ENCODE measurements at regions of chr16 and their contacts with region 1.

Region 1: GRCh38 chr16:25838724-25839186 is 147.0 kb downstream of the HS3ST4 start:
- DNase-seq: peak in 4 of 5 donors; percentile 37 to 48 (median 42)
- H3K4me3 ChIP-seq: no peak overlapping the region
- H3K4me3 Mint-ChIP-seq: peak overlapping the region in 2 of 8 donors; percentile 8 to 17
- H3K27ac ChIP-seq: no peak overlapping the region
- H3K27ac Mint-ChIP-seq: no peak overlapping the region
- H3K4me1 ChIP-seq: no peaks in the 10 kb centered on the region
- H3K4me1 Mint-ChIP-seq: peaks cover 0 to 4% (median under 1%) of the 10 kb centered on the region in 4 donors
- H3K27me3 ChIP-seq: no peaks in the 10 kb centered on the region
- H3K27me3 Mint-ChIP-seq: peaks cover 2 to 13% of the 10 kb centered on the region in 2 donors

Region 2: GRCh38 chr16:25785361-25785760 is 53.4 kb before region 1 on chr16:
- CTCF ChIA-PET with region 1: no interaction called
- POLR2A ChIA-PET with region 1: no interaction called
- intact Hi-C with region 1: no loop called
- DNase-seq: no peak
- H3K4me3 ChIP-seq: no peak overlapping the region
- H3K4me3 Mint-ChIP-seq: no peak overlapping the region
- H3K27ac ChIP-seq: no peak overlapping the region
- H3K27ac Mint-ChIP-seq: no peak overlapping the region
- H3K4me1 ChIP-seq: no peaks in the 10 kb centered on the region
- H3K4me1 Mint-ChIP-seq: no peaks in the 10 kb centered on the region
- H3K27me3 ChIP-seq: no peaks in the 10 kb centered on the region
- H3K27me3 Mint-ChIP-seq: peaks cover 0 to 3% of the 10 kb centered on the region in 2 donors

Region 3: DNA sequence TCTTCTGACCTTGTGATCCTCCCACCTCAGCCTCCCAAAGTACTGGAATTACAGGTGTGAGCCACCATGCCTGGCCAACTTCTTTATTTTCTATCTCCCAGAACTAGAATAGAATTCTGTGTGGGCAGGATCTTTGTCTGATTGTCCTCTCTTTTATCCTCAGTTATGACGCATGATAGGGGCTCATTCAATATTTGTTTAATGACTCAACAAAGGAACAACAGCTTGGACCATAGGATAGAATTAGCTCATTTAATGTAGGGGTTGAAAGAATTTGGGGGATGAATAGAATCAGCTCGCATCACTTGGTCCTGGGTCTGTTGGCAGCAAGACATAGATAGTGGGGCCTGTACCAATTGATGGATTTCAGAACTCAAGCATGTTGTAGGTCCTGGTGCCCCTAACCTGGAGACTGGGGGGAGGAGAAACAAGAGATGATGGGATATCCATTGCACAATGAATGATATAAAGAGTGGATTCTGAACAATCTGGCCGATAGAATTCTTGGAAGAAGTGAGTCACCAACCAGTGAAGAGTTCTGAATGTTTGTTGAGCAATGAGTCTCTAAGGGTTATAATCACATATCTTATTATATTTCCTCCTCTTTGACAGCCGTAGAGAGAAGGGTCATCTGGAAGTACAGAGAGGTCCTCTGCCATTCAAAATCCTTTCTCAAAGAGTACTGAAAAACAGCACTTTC is 103.2 kb after region 1 on chr16:
- CTCF ChIA-PET with region 1: no interaction called
- POLR2A ChIA-PET with region 1: no interaction called
- intact Hi-C with region 1: no loop called
- DNase-seq: no peak
- H3K4me3 ChIP-seq: no peak overlapping the region
- H3K4me3 Mint-ChIP-seq: no peak overlapping the region
- H3K27ac ChIP-seq: no peak overlapping the region
- H3K27ac Mint-ChIP-seq: no peak overlapping the region
- H3K4me1 ChIP-seq: no peaks in the 10 kb centered on the region
- H3K4me1 Mint-ChIP-seq: no peaks in the 10 kb centered on the region
- H3K27me3 ChIP-seq: no peaks in the 10 kb centered on the region
- H3K27me3 Mint-ChIP-seq: no peaks in the 10 kb centered on the region

Region 4: GRCh38 chr16:27455700-27456099 is 1616.9 kb after region 1 on chr16:
- CTCF ChIA-PET with region 1: no interaction called
- POLR2A ChIA-PET with region 1: no interaction called
- intact Hi-C with region 1: loop called (anchors 5 kb)
- DNase-seq: peak in 3 of 5 donors; percentile 9 to 55 (median 27)
- H3K4me3 ChIP-seq: no peak overlapping the region
- H3K4me3 Mint-ChIP-seq: peak overlapping the region in 3 of 8 donors; percentile 12 to 41 (median 26)
- H3K27ac ChIP-seq: no peak overlapping the region
- H3K27ac Mint-ChIP-seq: peak overlapping the region in 6 of 7 donors; percentile 58 to 93 (median 68)
- H3K4me1 ChIP-seq: peaks cover 55% of the 10 kb centered on the region
- H3K4me1 Mint-ChIP-seq: peaks cover 26 to 69% (median 54%) of the 10 kb centered on the region in 4 donors
- H3K27me3 ChIP-seq: no peaks in the 10 kb centered on the region
- H3K27me3 Mint-ChIP-seq: no peaks in the 10 kb centered on the region

Measured in CD4-positive, alpha-beta memory T cell (primary cell).